HAP-1 (cell line): ENCODE measurements at regions of chr15 and their contacts with region 1.

Region 1: GRCh38 chr15:100918034-100918689 is 995 bp upstream of the LRRK1 start:
- DNase-seq: peak; percentile 84 to 90
- H3K4me3 ChIP-seq: peak overlapping the region; percentile 48
- H3K4me1 ChIP-seq: peaks cover 12% of the 10 kb centered on the region
- H3K27me3 ChIP-seq: no peaks in the 10 kb centered on the region

Region 2: DNA sequence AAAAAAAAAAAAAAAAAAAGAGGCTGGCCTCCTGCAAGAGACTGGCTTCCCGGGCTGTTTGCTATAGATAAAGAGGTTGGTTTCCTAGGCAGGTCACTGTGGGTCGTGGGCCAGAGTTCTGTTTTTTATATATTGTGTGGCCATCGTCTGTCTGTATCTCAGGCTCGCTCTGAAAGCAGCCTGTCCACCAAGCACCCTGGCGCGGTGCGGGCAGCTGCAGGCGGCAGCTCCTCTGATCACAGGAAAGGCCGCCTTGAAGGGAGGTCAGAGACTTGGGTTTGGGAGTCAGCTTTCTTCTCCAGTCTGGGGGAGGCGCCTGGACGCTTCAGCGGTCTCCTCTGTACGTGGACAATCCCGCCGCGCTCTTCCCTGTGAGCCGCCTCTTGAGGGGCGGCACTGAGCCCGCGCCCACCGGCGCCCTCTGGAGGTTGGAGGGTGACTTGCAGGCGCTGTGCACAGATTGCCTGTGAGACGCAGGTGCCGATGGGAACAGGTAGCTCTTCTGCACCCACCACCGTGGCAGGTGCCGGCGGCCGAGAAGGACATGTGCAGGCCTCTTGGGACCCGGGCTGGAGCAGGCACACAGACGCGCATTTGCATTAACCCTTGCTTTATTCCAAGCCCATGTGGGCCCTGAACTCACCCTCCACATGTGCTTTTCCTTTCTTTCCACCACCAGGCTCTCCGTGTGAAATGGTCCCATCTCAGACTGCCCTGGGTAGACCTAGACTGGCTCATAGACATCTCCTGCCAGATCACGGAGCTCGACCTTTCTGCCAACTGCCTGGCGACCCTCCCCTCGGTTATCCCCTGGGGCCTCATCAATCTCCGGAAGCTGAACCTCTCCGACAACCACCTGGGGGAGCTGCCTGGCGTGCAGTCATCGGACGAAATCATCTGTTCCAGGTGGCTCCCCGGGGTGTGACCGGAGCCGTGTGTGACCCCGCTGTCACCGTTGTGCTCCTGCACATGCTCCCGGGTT is 90.3 kb after region 1 on chr15:
- in situ Hi-C with region 1: loop called (anchors 5 kb)
- DNase-seq: peak; percentile 69 to 91
- H3K4me3 ChIP-seq: peak overlapping the region; percentile 26
- H3K4me1 ChIP-seq: peaks cover 8% of the 10 kb centered on the region; the same call in 1 of the 2 replicates
- H3K27me3 ChIP-seq: no peaks in the 10 kb centered on the region

Region 3: DNA sequence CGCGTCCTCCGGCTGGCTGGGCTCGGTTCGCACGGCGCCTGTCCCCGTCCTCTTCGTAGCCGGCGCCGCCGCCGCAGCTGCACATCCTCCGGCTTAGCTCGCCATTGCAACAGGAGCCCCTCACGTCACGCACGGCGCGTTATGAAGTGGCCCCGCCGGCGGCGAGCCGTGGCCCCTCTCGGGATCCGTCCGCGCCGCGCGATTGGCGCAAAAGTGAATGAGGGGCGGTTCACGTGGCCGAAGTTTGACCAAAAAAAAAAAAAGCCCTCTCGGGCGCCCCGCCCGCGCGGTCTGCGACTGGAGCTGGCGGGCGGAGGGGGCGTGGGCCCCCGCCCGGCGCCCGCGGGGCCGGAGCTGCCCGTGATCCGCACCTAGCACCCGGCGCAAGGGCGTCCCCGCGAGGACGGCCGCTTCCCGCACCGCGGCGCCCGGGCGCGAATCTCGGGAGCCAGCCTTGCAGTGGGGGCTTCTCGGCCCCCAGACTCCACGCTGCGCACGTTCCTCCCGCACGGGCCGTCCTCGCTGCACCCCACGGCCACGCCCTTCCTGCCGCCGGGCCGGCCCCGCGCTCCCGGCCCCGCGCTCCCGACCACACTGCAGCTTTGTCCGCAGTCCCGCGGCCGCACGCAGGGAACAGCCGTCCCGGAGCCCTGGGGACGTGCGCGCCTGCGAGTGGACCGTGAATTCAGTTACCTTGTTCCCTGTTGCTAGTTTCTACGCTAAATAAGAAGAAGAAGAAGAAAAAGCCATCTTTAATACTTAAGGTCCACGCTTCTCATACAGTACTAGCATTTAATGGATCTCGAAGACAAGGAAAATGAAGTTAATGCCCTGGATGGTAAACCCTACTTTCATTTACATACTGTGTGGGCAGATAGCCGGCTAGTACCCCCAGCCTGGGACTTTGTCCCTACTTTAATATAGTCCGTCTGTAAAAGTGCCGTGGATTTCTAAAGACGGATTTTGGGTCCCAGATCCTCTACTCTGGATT is 334.0 kb after region 1 on chr15 and contains the start of gene CHSY1:
- in situ Hi-C with region 1: loop called (anchors 25 kb)
- DNase-seq: peak; percentile 74 to 87
- H3K4me3 ChIP-seq: peak within 1 kb of the TSS; percentile 62
- H3K4me1 ChIP-seq: peaks cover 7% of the 10 kb centered on the region
- H3K27me3 ChIP-seq: 0 out of 2 replicates have a peak, but pooled peaks cover 3% of the 10 kb centered on the region

Region 4: DNA sequence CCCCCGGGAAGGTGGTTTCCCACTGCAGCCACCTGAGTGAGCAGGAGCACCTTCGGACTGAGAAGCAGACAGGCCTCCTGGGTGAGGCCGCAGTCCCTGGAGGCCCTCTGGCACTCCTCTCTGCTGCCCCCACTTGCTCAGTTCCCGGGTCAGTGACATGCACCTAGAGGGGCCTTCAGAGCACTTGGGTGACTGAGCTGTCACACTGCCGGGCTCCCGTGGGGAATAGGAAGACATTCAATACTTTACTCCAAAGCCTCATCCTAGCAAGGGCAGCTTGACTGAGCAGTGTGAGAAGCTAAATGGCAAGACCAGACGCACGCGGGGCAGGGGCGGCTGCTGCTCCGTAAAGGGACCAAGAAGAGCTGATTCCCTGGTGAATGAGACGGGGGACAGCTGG is 508.7 kb after region 1 on chr15:
- in situ Hi-C with region 1: no loop called
- DNase-seq: no peak
- H3K4me3 ChIP-seq: no peak overlapping the region
- H3K4me1 ChIP-seq: no peaks in the 10 kb centered on the region
- H3K27me3 ChIP-seq: no peaks in the 10 kb centered on the region